ENCODE measurements at regions of chr16 and their contacts with region 1.

Region 1: DNA sequence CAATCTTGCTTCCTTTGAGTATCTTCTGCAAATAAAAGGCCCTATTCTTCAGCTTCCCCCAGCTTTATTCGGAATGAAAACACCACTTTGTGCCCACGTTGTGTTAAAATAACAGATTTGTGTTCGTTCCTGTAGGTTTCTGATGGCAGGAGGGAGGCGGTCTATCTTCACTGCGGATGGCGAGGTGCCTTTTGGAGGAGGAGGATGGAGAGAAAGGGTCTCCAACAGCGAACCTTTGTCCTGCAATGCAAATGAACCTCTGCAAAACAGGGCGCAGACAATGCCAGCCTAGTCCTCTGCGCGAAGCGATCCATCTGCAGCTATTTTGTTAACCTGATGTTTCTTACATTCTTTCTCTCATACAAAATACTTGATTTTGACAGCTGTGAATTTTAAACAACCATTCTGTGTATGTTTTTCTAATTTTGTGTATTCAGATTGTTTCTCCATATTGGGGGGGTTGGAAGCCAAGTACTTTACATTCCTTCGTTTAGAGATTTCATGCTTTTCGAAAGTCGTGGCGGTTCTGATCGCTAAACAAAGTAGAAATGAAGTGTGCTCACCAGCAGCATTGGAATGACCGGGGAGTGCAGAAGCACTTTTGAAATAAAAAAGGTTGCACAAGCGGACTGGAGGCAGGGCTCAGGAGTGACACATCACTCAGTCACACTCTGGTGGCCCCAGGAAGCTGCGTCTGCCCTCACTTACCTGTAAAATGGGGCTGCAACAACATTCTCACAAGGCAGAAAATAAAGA is 279.0 kb upstream of the IRX5 start:
- DNase-seq: no peak

Region 2: DNA sequence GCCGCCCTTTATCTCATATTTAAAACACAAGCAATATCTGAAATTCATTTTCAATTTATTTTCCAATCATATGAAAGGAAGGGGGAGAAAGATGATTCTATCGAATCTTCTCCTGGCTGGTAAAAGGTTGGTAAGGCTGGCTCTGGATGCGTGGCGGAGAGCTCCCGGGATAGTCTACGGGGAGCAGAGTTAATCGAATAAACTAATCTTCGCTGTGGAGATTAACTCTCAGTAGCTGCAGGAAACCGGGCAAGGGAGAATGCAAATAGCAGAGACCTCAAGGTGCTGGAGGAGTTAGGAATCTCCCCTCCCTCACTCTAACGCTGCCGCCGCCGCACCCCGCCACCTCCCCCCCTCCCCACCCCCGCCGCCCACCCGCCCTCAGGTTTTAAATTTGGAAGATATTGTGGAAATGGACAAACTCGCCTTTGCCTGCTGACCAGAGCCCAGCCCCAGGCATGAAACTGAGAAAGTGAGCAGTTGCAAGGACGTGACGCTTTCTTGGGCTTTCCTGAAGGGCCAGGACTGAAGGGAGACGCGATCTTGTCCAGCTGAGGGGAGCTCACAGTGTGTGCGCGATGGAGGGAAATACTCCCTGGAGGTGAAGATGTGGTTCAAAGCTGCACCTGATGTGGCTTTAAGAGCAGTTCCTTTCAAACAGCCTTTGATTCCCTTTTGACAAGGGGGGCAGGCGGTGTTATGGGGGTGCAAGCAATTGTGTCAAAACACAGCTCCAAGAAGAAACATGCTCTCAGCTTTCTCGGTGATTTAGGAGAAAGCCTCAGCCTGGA is 56.8 kb before region 1 on chr16:
- intact Hi-C with region 1: no loop called
- DNase-seq: no peak

Region 3: GRCh38 chr16:54722210-54722676 is 70.6 kb after region 1 on chr16:
- intact Hi-C with region 1: loop called in 1 of 2 experiments (anchors 2 kb)
- DNase-seq: no peak

Region 4: GRCh38 chr16:54862529-54862928 is 210.9 kb after region 1 on chr16:
- intact Hi-C with region 1: no loop called
- DNase-seq: no peak

Measured in posterior vena cava (tissue), 2 donors.